ENCODE measurements at regions of chr3 and their contacts with region 1.

Region 1: DNA sequence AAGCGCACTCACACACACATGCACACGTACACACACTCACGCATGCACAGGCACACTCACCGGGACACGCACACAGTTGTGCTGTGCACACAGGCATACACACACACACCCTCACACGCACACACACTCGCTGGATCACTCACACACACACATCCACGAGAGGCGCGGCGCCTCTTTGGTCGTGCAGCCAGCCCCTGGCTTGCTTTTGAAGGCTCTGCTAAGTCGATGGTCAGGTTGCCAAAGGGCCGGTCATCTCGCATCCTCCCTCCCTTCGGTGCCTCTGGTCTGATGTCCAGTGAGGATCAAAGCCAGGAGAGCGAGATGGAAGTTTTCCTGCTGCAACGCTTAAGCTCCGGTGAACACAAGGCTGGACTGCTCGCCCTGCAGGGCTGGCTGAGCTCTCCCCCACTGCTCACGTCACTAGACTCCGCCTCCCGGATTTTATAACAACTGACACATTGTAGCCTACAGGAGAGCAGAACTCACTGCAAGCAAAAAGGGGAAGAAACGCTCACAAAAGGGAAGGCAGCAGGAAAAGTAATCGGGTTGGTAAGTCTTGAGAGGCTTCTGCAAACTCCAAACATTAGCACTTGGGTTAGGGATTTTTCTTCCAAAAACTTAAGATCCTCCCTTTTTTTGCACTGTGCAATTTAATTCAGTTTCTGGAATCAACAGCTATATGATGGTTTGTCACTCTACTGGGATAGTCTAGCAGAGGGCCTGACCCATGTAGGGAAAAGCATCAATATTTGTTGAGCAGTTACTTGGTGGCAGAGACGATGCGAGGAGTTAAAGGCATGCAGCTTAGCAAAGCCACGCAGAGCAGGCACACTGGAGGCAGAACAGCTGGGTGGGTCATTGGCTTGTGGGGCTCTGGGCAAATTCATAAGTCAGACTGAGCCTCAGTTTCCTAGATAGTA is at the start of gene SRGAP3:
- DNase-seq: peak; percentile 95
- H3K4me3 Mint-ChIP-seq: peak within 1 kb of the TSS; percentile 85
- H3K27ac Mint-ChIP-seq: no peak within 1 kb of the TSS
- H3K4me1 Mint-ChIP-seq: peaks cover 18% of the 10 kb centered on the region
- H3K27me3 Mint-ChIP-seq: peaks cover 7% of the 10 kb centered on the region
- total RNA-seq, gene SRGAP3: 0.40 and 0.45 TPM in 2 replicates

Region 2: GRCh38 chr3:8963137-8963869 is 286.2 kb before region 1 on chr3 and contains the start of gene RAD18:
- intact Hi-C with region 1: loop called (anchors 2 kb)
- DNase-seq: peak; percentile 98
- H3K4me3 Mint-ChIP-seq: peak within 1 kb of the TSS; percentile 94
- H3K27ac Mint-ChIP-seq: peak within 1 kb of the TSS; percentile 94
- H3K4me1 Mint-ChIP-seq: peaks cover 29% of the 10 kb centered on the region
- H3K27me3 Mint-ChIP-seq: peaks cover 2% of the 10 kb centered on the region
- total RNA-seq, gene RAD18: 52.8 and 55.1 TPM in 2 replicates

Region 3: DNA sequence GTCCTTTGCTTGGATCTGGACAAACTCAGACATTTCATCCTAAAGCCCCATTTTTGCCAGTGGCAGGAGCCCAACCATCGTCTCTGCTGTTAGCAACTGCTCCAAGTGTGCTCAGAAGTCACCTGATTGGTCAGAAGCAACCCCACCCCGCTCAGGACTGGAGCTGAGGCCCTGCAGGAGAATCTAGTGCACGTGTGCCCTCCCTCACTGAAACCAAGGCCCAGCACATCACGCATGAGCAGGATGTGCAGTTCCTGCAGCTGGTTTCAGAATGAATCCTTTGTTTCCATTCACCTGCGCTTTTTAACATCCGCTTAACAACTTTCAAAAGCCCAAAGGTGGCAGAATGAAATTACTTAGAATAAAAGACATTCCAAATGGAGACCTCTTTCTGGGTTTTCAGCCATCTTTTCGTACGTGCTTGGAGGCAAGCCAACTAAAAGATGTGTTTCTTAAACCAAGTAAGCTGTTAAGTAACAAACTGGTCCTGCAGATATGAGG is 81.2 kb before region 1 on chr3:
- intact Hi-C with region 1: loop called (anchors 1 kb)
- DNase-seq: peak; percentile 92
- H3K4me3 Mint-ChIP-seq: peak overlapping the region; percentile 49
- H3K27ac Mint-ChIP-seq: peak overlapping the region; percentile 22
- H3K4me1 Mint-ChIP-seq: peaks cover 21% of the 10 kb centered on the region
- H3K27me3 Mint-ChIP-seq: no peaks in the 10 kb centered on the region

Region 4: DNA sequence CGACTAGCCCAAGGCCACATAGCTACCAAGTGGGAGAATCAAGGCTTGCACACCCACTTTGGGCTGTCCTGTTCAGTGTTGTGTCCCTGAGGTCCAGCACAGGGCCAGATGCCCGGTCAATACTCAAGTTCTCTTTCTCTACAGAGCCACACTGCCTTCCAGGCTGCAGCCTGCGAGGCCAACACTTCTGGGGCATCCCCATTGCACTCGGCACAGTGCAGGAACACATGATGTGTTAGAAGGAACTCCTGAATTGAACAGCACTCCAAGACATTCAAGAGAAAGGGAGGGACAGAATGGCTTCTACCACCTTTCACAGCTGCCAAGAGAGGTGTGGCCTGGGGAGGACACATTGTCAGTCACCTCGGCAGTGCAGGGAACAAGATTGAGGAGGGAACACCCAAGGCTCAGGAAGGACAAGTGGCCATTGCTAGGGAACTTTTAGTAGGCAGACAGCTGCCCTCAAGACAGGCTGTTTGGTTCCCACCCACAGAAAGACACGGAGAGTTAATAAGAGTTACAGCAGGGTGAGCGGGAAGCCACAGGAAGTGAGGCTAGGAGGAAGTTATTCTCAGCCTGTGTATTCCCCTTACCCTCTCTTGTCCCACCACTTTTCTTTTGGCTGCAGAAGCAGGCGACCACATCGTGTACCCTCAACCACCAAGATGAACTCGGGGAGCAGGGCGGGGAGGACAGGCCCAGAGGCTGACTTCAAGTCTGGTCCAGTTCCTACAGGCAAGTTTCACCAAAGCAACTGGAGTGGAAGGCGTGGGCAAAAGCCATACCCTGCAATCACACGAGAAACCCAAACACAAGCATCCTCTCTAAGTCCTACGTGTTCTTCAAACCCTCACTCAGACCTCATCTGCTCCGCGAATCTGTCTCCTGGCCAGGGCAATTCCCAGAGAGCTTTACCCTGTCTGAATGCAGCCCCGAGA is 69.4 kb before region 1 on chr3:
- intact Hi-C with region 1: loop called (anchors 5 kb)
- DNase-seq: peak; percentile 75
- H3K4me3 Mint-ChIP-seq: peak overlapping the region; percentile 76
- H3K27ac Mint-ChIP-seq: peak overlapping the region; percentile 85
- H3K4me1 Mint-ChIP-seq: peaks cover 36% of the 10 kb centered on the region
- H3K27me3 Mint-ChIP-seq: peaks cover 8% of the 10 kb centered on the region

Region 5: DNA sequence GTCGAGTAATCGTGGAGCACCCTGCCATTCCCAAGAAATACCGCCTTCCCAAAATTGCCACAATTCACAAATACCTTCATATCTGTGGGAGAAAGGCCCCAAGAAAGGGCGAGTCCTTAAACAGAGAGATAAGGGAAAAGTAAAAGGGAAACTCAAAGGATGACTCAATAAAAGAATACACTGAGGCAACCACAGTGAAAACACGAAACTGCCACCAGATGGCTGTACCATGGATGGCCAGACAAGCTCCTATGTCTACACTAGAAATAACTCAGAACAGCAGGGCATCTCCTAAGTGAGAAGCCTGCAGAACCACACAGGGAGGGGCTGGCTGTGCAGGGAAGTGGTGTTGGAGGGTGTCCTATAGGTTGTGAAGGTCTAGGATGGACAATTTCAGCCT is 25.0 kb before region 1 on chr3:
- intact Hi-C with region 1: loop called (anchors 1 kb)
- DNase-seq: peak; percentile 72
- H3K4me3 Mint-ChIP-seq: no peak overlapping the region
- H3K27ac Mint-ChIP-seq: no peak overlapping the region
- H3K4me1 Mint-ChIP-seq: peaks cover 19% of the 10 kb centered on the region
- H3K27me3 Mint-ChIP-seq: peaks cover 2% of the 10 kb centered on the region

Region 6: DNA sequence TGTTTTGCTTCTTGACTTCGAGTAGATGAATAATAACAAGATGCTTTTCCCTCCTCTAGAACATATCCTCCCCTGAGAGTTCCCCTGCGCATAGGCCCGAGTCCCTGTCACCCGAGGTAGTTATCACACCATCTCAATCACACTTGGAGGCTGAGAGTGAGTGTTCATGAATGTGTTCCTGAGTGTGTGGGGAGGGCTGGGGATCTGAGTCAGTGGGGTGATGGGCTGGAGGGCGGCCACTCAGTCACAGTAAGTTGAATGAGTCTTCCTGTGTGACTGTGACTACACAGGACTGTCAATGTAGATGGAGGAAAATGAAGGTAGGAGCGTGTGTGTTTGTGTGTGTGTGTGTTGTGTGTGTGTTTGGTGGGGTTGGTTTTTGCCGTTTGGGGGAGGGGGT is 218.9 kb after region 1 on chr3:
- intact Hi-C with region 1: no loop called
- DNase-seq: no peak
- H3K4me3 Mint-ChIP-seq: no peak overlapping the region
- H3K27ac Mint-ChIP-seq: peak overlapping the region; percentile 80
- H3K4me1 Mint-ChIP-seq: peaks cover 25% of the 10 kb centered on the region
- H3K27me3 Mint-ChIP-seq: no peaks in the 10 kb centered on the region

Measured in activated CD4-positive, alpha-beta T cell treated with anti-CD3 and anti-CD28 coated beads, Interleukin-2, amount 10 ng/mL, durations not matched to agents 24 days and 14 days (primary cell).